ENCODE measurements at regions of chr2 and their contacts with region 1.

Region 1: GRCh38 chr2:177306550-177306949 is 42.0 kb upstream of the NFE2L2 start:
- DNase-seq: no peak
- ATAC-seq: no peak
- H3K4me3 ChIP-seq: no peak overlapping the region
- H3K27ac ChIP-seq: no peak overlapping the region
- H3K4me1 ChIP-seq: no peaks in the 10 kb centered on the region
- H3K27me3 ChIP-seq: no peaks in the 10 kb centered on the region
- CTCF ChIP-seq: no peak

Region 2: DNA sequence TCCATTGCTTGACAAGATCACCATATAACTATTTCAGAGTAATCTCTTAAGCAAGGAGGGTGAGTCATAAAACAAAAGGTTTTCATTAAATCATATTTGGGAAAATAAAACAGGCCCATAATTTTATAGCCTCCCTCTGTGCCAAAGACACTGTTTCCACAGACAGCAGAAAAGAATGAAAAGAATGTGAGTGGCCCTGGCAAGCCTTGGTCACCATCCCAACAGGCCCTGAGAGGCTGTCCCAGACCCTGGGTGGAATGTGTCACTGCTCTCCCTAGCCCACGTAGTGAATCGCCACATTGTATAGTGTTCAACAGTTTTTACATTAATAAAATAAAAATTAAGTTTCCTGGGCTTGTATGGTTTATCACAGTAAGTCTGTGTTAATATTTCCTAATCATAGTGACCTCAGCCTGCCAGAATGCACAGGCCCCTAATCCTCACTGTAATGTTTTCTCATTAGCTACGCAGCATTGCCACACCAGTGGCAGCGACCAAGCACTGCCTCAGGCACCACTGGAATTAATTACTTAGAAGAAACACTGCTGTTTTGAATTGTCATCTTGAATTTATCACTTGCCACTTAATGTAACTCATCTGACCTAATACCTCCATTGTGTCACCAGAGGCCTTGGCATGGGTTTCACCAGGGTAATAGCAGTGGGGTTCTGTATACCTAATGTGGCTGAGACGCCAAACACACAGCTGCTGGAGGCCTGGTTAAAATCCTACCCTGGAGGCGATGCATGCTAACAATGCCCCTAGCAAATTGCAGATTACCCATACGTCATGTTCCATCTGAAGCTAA is 1706.3 kb before region 1 on chr2:
- intact Hi-C with region 1: loop called in 1 of 2 experiments (anchors 10 kb)
- DNase-seq: peak; percentile 27 to 63
- ATAC-seq: peak; percentile 43 to 61 (median 48)
- H3K4me3 ChIP-seq: no peak overlapping the region
- H3K27ac ChIP-seq: no peak overlapping the region
- H3K4me1 ChIP-seq: no peaks in the 10 kb centered on the region
- H3K27me3 ChIP-seq: no peaks in the 10 kb centered on the region
- CTCF ChIP-seq: no peak

Region 3: DNA sequence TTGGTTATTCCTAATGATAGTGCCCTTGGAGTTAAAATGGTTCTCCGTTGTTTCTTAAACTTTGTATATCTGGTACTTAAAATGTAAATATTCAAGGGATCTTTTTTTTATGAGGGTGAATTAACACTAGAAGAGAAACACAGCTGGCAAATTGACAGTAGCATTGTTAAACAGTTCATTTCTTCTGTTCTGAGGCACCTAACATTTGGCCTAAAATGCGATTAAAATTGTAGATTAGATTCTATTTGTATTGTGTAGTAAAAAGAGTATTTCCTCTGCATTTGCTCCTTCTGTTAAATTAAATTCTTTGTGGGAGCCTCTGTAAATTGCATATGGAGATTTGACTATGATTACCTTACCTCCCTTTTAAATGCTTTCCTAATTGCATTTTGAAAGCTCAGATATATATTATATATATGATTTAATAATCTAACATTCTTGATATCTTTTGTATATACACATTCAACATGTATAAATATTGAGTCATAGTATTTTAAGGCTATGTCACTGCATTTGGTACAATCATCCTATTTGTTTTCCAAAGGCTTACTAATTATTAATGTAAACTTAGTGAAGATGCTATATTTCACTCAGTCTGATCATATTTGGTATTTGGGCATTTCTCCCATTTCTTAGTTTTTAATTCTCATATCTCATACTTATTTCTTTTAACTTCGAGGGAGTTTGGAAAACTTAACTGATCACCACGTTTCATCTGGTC is 210.4 kb after region 1 on chr2:
- intact Hi-C with region 1: no loop called
- DNase-seq: no peak
- ATAC-seq: no peak
- H3K4me3 ChIP-seq: no peak overlapping the region
- H3K27ac ChIP-seq: no peak overlapping the region
- H3K4me1 ChIP-seq: no peaks in the 10 kb centered on the region
- H3K27me3 ChIP-seq: no peaks in the 10 kb centered on the region
- CTCF ChIP-seq: no peak